Psoas muscle (tissue), 8 donors: ENCODE measurements at regions of chr15 and their contacts with region 1.

Region 1: DNA sequence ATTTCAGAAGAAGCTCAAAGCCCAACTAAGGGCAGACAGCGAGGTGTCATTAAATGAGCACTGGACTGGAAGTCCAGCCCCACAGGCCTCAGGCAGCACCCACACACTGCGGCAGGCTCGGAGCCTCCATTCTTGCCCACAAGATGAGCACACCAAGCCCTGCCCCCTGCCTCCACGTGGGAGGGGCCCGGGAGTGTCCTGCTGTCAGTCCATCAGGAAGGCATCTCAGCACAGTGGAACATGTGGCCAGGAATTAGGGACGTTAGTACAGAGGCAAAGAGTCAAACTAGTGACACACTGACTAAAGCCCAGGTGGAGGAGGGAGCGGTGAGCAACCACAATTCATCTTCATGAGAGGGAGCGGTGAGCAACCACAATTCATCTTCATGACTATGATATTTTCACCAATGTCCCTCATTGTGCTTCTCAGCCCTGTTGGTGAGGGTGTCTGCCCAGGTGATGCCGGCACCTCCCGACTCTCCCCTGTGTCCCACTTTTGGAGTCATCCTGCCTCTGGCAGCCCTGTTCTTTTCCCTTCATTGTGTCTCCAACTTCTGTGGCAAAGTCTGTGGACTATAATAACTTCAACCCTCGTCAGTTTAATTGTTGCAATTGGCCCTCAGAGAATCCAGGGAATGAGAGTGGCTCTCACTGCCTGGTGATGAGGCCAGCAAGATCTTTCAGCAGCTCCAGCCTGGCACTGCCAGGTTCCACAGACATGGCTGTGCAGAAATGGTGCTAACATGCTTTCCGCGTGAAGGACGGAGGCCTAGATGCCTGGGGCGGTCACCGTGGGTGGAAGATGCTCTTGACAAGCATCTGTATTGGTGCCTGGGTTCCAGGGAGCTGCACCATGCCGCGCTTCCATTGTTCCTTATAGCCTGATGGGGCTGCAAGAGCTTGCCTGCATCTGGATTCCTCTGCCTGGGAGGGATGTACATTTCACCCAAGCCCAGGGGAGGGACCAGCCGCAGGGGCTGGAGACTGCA is 23.1 kb upstream of the SKOR1 start:
- DNase-seq: no peak
- ATAC-seq: no peak
- H3K4me3 ChIP-seq: no peak overlapping the region
- H3K27ac ChIP-seq: no peak overlapping the region
- H3K4me1 ChIP-seq: no peaks in the 10 kb centered on the region
- H3K27me3 ChIP-seq: no peaks in the 10 kb centered on the region
- CTCF ChIP-seq: no peak

Region 2: GRCh38 chr15:67784856-67785430 is 17.3 kb before region 1 on chr15:
- intact Hi-C with region 1: loop called in 1 of 2 experiments (anchors 1 kb)
- DNase-seq: no peak
- ATAC-seq: no peak
- H3K4me3 ChIP-seq: no peak overlapping the region
- H3K27ac ChIP-seq: no peak overlapping the region
- H3K4me1 ChIP-seq: no peaks in the 10 kb centered on the region
- H3K27me3 ChIP-seq: no peaks in the 10 kb centered on the region
- CTCF ChIP-seq: no peak